Psoas muscle (tissue), 8 donors: ENCODE measurements at regions of chr2 and their contacts with region 1.

Region 1: GRCh38 chr2:173271825-173272224 is 82.8 kb upstream of the CDCA7 start:
- DNase-seq: no peak
- ATAC-seq: no peak
- H3K4me3 ChIP-seq: no peak overlapping the region
- H3K27ac ChIP-seq: no peak overlapping the region
- H3K4me1 ChIP-seq: no peaks in the 10 kb centered on the region
- H3K27me3 ChIP-seq: no peaks in the 10 kb centered on the region
- CTCF ChIP-seq: no peak

Region 2: DNA sequence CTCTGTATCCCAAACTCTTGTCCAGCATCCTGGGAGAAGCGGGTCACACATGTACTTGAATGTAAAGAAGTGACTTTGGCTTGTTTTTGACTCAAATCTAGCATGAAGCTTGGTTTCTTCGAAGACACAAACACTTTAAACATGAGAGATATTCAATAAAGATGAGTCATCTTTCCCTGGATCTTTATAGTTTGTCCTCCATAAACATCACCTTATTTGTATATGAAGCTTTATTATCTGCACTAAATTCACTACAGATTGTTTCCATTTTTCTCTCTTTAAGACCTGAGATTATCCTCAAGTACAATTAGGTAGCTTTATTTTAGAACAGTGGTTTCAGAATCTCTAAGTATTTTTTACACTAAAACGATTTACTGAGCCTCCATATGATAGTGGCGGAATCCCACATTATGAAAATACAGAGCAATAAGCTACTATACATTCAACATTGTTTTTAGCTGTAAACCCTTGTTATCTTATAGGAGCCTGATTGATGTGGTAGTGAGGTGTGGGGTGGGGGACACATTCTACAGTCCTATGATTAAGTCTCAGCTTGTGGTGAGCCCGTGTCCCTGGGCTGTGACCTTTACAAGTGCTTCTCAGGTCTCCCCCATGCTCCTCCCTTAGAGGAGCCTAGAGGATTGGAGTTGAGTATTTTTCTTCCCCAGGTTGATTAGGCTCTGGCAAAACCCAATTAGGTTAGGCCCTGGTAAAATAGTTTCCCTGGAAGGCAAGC is 615.8 kb before region 1 on chr2:
- intact Hi-C with region 1: no loop called
- DNase-seq: no peak
- ATAC-seq: no peak
- H3K4me3 ChIP-seq: no peak overlapping the region
- H3K27ac ChIP-seq: no peak overlapping the region
- H3K4me1 ChIP-seq: no peaks in the 10 kb centered on the region
- H3K27me3 ChIP-seq: no peaks in the 10 kb centered on the region
- CTCF ChIP-seq: no peak

Region 3: DNA sequence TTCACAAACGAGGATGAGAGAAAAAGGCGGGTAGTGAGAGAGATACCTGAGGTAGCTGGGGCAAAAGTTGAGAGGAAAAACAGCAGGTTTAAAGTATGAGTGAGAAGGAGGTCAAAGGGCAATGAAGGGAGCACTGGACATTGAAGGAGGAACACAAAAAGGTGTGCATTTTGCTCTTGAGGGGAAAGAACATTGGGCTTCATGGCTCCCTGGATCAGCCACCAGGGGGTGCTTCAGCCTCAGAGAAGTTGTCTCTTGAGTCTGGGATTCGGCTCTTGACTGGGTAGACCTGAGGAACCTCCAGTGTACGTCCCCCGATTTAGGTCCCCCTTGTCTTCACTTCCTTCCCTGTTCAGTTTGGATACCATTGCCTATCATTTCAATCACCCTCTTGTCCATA is 407.6 kb before region 1 on chr2:
- intact Hi-C with region 1: loop called in 1 of 2 experiments (anchors 10 kb)
- DNase-seq: peak; percentile 62 to 70
- ATAC-seq: peak; percentile 68 to 80 (median 72)
- H3K4me3 ChIP-seq: no peak overlapping the region
- H3K27ac ChIP-seq: no peak overlapping the region
- H3K4me1 ChIP-seq: peaks cover 4% of the 10 kb centered on the region
- H3K27me3 ChIP-seq: peaks cover 0 to 3% (median 0%) of the 10 kb centered on the region in 3 donors
- CTCF ChIP-seq: peak; percentile 72